Thyroid gland (tissue), 4 donors: ENCODE measurements at regions of chr2 and their contacts with region 1.

Region 1: GRCh38 chr2:73243884-73244570 is 9.9 kb downstream of the CCT7 start:
- DNase-seq: no peak
- H3K4me3 ChIP-seq: no peak overlapping the region
- H3K27ac ChIP-seq: no peak overlapping the region
- H3K4me1 ChIP-seq: no peaks in the 10 kb centered on the region
- H3K27me3 ChIP-seq: no peaks in the 10 kb centered on the region
- CTCF ChIP-seq: no peak
- POLR2A ChIP-seq: no peak

Region 2: DNA sequence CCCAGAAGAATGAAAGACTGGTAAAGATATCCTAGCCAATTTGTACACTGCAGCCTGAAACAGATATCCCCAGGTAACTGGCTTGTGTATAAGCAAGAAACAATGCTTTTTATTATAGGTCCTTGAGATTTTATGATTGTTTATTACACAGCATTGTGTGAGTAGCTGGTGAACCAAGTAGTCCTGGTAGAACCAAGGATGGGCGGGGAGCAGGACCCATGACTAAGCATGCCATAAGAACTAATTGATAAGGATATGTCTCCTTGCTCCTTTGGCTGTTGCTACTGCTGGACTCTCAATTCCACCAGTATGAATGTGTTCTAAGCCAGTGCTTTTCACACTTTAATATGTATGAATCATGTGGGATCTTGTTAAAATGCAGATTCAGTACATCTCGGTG is 129.3 kb after region 1 on chr2:
- intact Hi-C with region 1: loop called (anchors 10 kb)
- DNase-seq: no peak
- H3K4me3 ChIP-seq: no peak overlapping the region
- H3K27ac ChIP-seq: no peak overlapping the region
- H3K4me1 ChIP-seq: no peaks in the 10 kb centered on the region
- H3K27me3 ChIP-seq: no peaks in the 10 kb centered on the region
- CTCF ChIP-seq: no peak
- POLR2A ChIP-seq: no peak